ENCODE measurements at regions of chr3 and their contacts with region 1.

Region 1: GRCh38 chr3:4804161-4805058 is 174.8 kb upstream of the BHLHE40 start:
- DNase-seq: no peak
- H3K4me3 Mint-ChIP-seq: no peak overlapping the region
- H3K27ac Mint-ChIP-seq: peak overlapping the region; percentile 76
- H3K4me1 Mint-ChIP-seq: peaks cover 59% of the 10 kb centered on the region
- H3K27me3 Mint-ChIP-seq: no peaks in the 10 kb centered on the region

Region 2: DNA sequence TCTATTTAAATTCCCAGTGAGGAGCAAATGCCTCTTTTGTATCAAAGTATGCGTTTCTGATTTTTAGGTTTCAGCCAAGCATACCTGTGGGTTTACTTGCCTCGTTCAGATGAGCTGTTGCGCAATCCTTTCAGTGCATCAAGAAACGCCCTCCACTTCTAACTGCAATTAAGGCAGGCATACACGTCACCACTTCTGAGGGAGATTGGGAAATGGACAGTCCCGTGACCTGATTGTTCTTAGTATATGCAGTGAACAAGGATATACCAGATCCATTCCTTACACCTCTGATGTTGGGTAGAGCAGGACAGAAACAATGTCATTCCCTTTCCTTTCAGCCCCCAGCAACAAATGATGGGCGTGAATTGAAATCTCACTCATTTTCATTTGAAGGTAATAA is 92.3 kb before region 1 on chr3:
- intact Hi-C with region 1: loop called (anchors 1 kb)
- DNase-seq: no peak
- H3K4me3 Mint-ChIP-seq: no peak overlapping the region
- H3K27ac Mint-ChIP-seq: peak overlapping the region; percentile 32
- H3K4me1 Mint-ChIP-seq: peaks cover 61% of the 10 kb centered on the region
- H3K27me3 Mint-ChIP-seq: no peaks in the 10 kb centered on the region

Region 3: GRCh38 chr3:4821975-4822374 is 17.6 kb after region 1 on chr3:
- intact Hi-C with region 1: loop called (anchors 1 kb)
- DNase-seq: peak; percentile 82
- H3K4me3 Mint-ChIP-seq: peak overlapping the region; percentile 86
- H3K27ac Mint-ChIP-seq: peak overlapping the region; percentile 100
- H3K4me1 Mint-ChIP-seq: peaks cover 98% of the 10 kb centered on the region
- H3K27me3 Mint-ChIP-seq: no peaks in the 10 kb centered on the region

Measured in activated T-helper 1 cell treated with anti-CD3 and anti-CD28 coated beads, Interleukin-12 subunit alpha, Interleukin-12 subunit beta, Interleukin-2, Interleukin-4 antibody, amounts not matched to agents 30 ng/mL and 10 ng/mL and 1 ng/mL, durations not matched to agents 14 hours and 24 hours and 36 hours (primary cell).